Activated naive CD4-positive, alpha-beta T cell treated with anti-CD3 and anti-CD28 coated beads, Interleukin-2, amount 10 ng/mL, durations not matched to agents 7 days and 5 days (primary cell): ENCODE measurements at regions of chr17 and their contacts with region 1.

Region 1: GRCh38 chr17:7336240-7337175 is at the start of gene ACAP1:
- DNase-seq: peak; percentile 95
- H3K4me3 Mint-ChIP-seq: peak within 1 kb of the TSS; percentile 88
- H3K27ac Mint-ChIP-seq: peak within 1 kb of the TSS; percentile 95
- H3K4me1 Mint-ChIP-seq: peaks cover 72% of the 10 kb centered on the region
- H3K27me3 Mint-ChIP-seq: no peaks in the 10 kb centered on the region

Region 2: DNA sequence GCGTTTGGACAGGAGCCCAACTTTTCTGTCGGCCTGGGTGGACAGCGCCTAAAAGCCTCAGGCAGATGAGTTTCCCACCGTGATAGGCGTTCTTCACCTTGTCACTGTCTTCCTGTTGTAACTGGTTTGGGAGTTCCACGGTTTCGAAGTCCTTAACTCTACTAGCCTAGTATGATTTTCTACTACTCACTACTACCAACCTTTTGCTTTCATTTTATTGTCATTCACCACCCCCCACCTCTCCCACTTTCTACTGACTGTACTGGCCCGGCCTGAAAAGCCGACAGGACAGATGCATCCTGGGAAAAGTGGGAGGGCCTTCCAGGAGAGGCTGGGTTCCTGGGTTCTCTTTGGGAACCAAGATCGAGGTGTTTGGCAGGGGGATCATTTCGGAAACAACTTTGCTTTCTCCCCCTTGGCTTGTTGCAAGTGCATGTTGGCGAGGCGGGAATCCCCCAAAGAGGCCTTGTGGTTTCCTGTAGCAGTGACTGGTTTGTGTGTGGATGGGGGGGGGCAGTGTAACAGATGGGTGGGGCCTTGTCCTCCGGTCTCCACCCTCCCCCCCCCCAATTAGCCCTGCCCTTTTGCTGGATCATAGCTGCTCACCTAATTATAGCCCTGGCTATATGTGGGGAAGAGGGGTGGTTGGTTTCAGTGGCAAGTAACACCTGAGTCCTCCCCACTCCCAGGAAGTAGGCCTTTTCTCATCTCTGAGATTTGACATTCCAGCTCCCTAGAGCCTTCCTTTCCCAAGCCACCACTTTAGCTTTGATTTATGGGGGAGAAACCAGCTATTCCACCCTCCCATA is 27.7 kb before region 1 on chr17:
- CTCF ChIA-PET with region 1: interaction called, 16 read pairs
- DNase-seq: peak; percentile 88
- H3K4me3 Mint-ChIP-seq: peak overlapping the region; percentile 96
- H3K27ac Mint-ChIP-seq: peak overlapping the region; percentile 100
- H3K4me1 Mint-ChIP-seq: peaks cover 61% of the 10 kb centered on the region
- H3K27me3 Mint-ChIP-seq: no peaks in the 10 kb centered on the region

Region 3: DNA sequence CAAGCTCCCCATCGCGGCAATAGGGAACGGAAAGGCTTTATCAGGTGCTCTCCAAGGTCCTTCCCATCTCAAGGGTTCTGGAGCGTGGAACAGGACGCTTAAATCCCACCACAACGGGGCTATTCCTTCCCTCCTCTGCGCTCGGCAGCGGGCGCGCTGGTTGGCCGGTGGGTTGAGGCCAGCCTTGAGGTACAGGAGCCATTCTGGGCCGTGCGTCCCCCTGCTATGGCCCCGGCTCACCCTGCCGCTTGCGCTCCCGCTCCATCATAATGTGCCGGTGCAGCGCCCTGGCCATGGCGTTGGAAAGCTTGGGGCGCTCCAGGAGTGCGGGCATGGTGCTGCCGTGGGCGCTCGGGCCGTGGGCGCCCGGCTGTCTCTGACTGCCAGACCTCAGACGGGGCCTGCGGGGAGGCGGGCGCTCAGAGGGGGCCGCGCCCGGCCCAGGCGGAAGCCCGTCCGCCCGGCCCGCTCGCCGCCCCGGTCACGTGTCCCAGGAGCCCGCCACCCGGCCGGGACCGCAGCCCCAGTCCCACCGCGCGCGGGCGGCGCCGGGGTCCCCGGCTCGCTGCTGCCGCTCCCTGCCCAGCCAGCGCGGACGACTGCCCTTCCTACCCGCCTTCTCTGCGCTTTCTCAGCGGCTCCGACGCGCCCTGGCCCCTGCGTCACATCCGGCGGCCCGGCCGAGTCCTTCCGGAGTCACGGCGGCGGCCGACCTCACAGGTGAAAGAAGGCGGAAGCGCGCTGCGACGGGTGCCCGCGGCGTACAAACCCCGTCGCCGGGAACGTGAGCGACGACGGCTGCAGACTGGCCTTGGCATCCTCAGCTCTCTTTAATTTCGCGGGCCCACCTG is 21.6 kb before region 1 on chr17 and contains the start of gene GPS2:
- CTCF ChIA-PET with region 1: interaction called, 16 read pairs
- DNase-seq: peak; percentile 96
- H3K4me3 Mint-ChIP-seq: peak within 1 kb of the TSS; percentile 94
- H3K27ac Mint-ChIP-seq: peak within 1 kb of the TSS; percentile 95
- H3K4me1 Mint-ChIP-seq: peaks cover 55% of the 10 kb centered on the region
- H3K27me3 Mint-ChIP-seq: no peaks in the 10 kb centered on the region

Region 4: GRCh38 chr17:7323731-7324437 is 12.6 kb before region 1 on chr17:
- CTCF ChIA-PET with region 1: interaction called, 54 read pairs
- DNase-seq: peak; percentile 76
- H3K4me3 Mint-ChIP-seq: no peak overlapping the region
- H3K27ac Mint-ChIP-seq: no peak overlapping the region
- H3K4me1 Mint-ChIP-seq: peaks cover 24% of the 10 kb centered on the region
- H3K27me3 Mint-ChIP-seq: no peaks in the 10 kb centered on the region